ENCODE measurements at regions of chr1 and their contacts with region 1.

Region 1: GRCh38 chr1:211625040-211625439 is 46.1 kb upstream of the SLC30A1 start:
- DNase-seq: no peak
- H3K4me3 ChIP-seq: no peak overlapping the region
- H3K27ac ChIP-seq: no peak overlapping the region
- H3K4me1 ChIP-seq: peaks cover 2% of the 10 kb centered on the region
- H3K27me3 ChIP-seq: no peaks in the 10 kb centered on the region
- CTCF ChIP-seq: no peak
- POLR2A ChIP-seq: no peak

Region 2: GRCh38 chr1:211589782-211590721 is 35.0 kb before region 1 on chr1:
- CTCF ChIA-PET with region 1: no interaction called
- POLR2A ChIA-PET with region 1: no interaction called
- dilution Hi-C with region 1: no loop called
- intact Hi-C with region 1: no loop called
- DNase-seq: no peak
- H3K4me3 ChIP-seq: no peak overlapping the region
- H3K27ac ChIP-seq: no peak overlapping the region
- H3K4me1 ChIP-seq: no peaks in the 10 kb centered on the region
- H3K27me3 ChIP-seq: no peaks in the 10 kb centered on the region
- CTCF ChIP-seq: no peak
- POLR2A ChIP-seq: no peak

Region 3: DNA sequence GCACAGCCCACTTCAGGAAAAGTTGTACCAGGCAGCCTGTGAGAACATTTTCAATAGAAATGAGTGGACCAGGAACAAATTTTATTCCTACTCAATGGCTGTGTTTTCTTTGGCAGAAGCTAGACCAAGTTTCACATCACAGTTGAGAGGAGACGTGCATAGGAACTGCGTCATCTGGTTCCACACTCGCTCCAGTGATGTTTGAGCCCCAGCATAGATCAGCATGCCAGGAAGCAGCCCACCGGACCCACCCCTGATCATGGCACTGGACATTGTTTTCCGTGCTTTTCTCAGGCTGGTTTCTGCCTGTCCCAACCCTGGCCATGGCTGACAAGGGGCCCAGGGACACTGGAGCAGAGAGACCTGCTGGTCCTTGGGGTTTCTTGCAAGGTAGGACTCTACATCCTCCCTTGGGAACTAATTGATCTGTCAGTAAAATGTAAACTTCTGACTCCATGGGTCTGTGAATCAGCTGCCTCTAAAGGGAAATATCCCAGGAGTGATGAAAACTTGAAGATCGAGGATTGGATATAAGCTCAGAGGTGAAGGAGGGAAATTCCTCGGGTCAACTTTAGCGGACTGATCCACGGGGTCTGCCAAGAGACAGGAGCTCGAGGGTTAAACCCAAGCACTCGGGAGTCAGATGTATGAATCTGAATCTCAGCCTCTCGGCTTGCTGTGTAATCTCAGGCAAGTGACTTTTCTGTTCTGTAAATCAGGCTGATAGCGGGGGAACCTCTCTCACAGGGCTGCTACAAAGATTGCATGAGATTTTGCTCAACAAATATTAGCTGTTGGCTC is 14.7 kb after region 1 on chr1:
- CTCF ChIA-PET with region 1: interaction called, 10 read pairs
- POLR2A ChIA-PET with region 1: no interaction called
- dilution Hi-C with region 1: no loop called
- intact Hi-C with region 1: no loop called
- DNase-seq: peak; percentile 96
- H3K4me3 ChIP-seq: peak overlapping the region in 2 of 3 experiments; percentile 31 to 37
- H3K27ac ChIP-seq: peak overlapping the region; percentile 95
- H3K4me1 ChIP-seq: peaks cover 27% of the 10 kb centered on the region
- H3K27me3 ChIP-seq: no peaks in the 10 kb centered on the region
- CTCF ChIP-seq: no peak
- POLR2A ChIP-seq: no peak

Region 4: GRCh38 chr1:211705467-211706091 is 80.5 kb after region 1 on chr1:
- CTCF ChIA-PET with region 1: no interaction called
- POLR2A ChIA-PET with region 1: no interaction called
- dilution Hi-C with region 1: no loop called
- intact Hi-C with region 1: no loop called
- DNase-seq: no peak
- H3K4me3 ChIP-seq: no peak overlapping the region
- H3K27ac ChIP-seq: no peak overlapping the region
- H3K4me1 ChIP-seq: no peaks in the 10 kb centered on the region
- H3K27me3 ChIP-seq: peaks cover 5 to 6% of the 10 kb centered on the region in 2 experiments
- CTCF ChIP-seq: no peak
- POLR2A ChIP-seq: no peak

Measured in endothelial cell of umbilical vein (primary cell).